IMR-90 (cell line): ENCODE measurements at regions of chr1 and their contacts with region 1.

Region 1: DNA sequence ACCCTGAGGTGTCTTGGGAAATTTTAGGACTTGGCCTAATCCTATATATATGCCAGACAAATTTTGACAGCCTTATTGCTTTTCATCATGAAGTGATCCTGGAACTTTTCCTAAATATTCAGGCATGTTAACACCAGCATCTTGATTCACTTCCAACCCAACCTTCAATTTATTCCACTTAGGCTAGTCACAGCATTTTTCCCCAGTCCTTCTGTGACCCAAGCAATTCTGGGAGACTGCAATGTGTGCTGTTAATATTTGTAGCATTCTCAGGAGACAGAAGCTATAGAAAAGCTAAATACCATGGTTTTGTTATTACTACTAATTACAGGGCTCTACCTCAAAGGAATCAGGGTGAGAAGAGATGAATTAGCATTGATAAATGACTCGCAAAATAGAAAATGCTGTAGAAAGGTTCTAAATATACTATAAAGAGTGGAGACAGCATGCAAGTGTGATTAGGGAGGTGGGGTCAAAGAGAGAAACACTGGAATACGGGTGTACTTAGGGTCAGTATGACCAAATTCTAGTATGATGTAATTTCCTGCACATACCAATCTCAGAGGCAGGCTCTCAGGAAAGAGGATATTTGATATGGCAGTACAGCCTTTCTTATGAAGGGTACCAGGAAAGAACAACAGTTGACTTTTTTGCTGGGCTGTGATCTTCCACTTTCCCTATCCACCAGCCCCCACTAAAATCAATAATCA is 29.1 kb downstream of the PRRX1 start:
- DNase-seq: peak; percentile 91
- ATAC-seq: peak; percentile 82
- H3K4me3 ChIP-seq: no peak overlapping the region
- H3K27ac ChIP-seq: peak overlapping the region; percentile 5; the same call in 1 of the 2 replicates
- H3K4me1 ChIP-seq: peaks cover 14% of the 10 kb centered on the region
- H3K27me3 ChIP-seq: no peaks in the 10 kb centered on the region
- CTCF ChIP-seq: no peak
- POLR2A ChIP-seq: no peak
- RAD21 ChIP-seq: no peak

Region 2: GRCh38 chr1:170670802-170671628 is 22.0 kb before region 1 on chr1:
- CTCF ChIA-PET with region 1: interaction called, 10 read pairs
- POLR2A ChIA-PET with region 1: no interaction called
- dilution Hi-C with region 1: no loop called
- in situ Hi-C with region 1: no loop called
- intact Hi-C with region 1: no loop called
- DNase-seq: peak; percentile 37
- ATAC-seq: peak; percentile 45; the same call in 1 of the 2 replicates
- H3K4me3 ChIP-seq: peak overlapping the region; percentile 39; the same call in 1 of the 2 replicates
- H3K27ac ChIP-seq: no peak overlapping the region
- H3K4me1 ChIP-seq: peaks cover 9% of the 10 kb centered on the region
- H3K27me3 ChIP-seq: no peaks in the 10 kb centered on the region
- CTCF ChIP-seq: peak; percentile 74
- POLR2A ChIP-seq: no peak
- RAD21 ChIP-seq: peak; percentile 76

Region 3: DNA sequence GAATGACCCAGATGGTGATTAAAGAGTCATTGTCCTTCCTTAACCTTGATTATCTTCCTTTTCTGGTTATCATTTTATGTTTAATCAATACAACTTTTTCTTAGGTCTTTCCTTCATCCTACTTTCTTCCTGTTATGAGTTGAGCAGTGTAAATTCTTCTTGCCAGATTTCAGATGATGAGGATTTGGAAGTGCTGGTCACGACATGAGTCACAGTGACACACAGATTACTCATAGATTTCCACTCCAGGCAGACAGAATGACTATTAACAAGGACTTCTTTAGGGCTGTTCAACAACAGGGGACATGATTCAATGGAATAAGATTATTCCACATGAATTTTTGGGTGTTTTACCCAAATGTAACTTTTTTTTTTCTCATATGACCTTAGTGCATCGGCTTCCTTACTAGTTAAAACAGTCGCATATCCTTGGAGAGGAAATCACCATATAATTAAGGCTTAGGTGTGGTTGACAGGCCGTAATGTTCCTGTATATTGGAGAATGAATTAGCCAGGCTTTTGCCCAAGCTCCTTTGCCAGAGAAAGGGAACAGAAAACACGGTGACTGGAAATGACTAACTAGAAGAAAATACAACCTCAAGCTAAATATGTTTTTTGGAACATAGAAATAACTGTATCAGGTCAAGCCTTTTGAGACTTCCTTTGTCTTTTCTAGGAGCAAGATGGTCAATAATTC is 15.1 kb after region 1 on chr1:
- CTCF ChIA-PET with region 1: interaction called, 3 read pairs
- POLR2A ChIA-PET with region 1: no interaction called
- dilution Hi-C with region 1: no loop called
- in situ Hi-C with region 1: no loop called
- intact Hi-C with region 1: loop called (anchors 2 kb)
- DNase-seq: peak; percentile 99
- ATAC-seq: peak; percentile 81
- H3K4me3 ChIP-seq: no peak overlapping the region
- H3K27ac ChIP-seq: no peak overlapping the region
- H3K4me1 ChIP-seq: peaks cover 8% of the 10 kb centered on the region
- H3K27me3 ChIP-seq: no peaks in the 10 kb centered on the region
- CTCF ChIP-seq: no peak
- POLR2A ChIP-seq: no peak
- RAD21 ChIP-seq: 0 out of 2 replicates have a peak, but pooled peaks have one; percentile 6